ENCODE measurements at regions of chr2 and their contacts with region 1.

Region 1: GRCh38 chr2:164560181-164560792 is 61.0 kb downstream of the GRB14 start:
- DNase-seq: no peak
- ATAC-seq: no peak

Region 2: DNA sequence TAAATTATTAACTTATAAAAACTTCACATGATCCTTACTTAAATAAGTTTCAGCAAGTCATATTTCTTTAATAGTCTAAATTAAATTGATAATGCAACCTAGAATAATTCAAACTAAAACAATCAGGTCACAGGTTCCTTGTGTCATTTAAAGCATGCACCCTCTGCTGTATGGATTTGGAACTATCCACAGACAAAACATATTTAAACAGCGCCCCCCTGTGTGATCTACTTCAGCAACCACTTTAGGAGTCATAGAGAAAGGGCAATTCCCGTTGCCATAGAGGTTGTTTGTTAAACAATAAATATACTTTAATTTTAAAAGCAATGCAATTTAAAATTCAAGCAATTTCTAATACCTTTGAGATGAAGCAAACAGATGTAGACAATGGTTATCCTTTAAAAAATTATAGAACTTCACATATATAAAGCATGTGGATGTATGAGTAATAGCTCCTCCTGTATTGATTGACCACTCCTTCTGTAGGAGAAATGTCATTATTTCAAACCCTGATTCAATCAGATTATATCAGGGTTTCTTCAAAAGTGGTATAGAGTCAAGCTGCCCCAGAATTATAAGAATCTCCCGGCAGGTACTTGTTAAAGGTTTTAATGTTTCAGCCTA is 39.8 kb after region 1 on chr2:
- intact Hi-C with region 1: loop called in 1 of 2 experiments (anchors 2 kb)
- DNase-seq: no peak
- ATAC-seq: peak; percentile 60 to 80